T-cell (primary cell): ENCODE measurements at regions of chr2 and their contacts with region 1.

Region 1: DNA sequence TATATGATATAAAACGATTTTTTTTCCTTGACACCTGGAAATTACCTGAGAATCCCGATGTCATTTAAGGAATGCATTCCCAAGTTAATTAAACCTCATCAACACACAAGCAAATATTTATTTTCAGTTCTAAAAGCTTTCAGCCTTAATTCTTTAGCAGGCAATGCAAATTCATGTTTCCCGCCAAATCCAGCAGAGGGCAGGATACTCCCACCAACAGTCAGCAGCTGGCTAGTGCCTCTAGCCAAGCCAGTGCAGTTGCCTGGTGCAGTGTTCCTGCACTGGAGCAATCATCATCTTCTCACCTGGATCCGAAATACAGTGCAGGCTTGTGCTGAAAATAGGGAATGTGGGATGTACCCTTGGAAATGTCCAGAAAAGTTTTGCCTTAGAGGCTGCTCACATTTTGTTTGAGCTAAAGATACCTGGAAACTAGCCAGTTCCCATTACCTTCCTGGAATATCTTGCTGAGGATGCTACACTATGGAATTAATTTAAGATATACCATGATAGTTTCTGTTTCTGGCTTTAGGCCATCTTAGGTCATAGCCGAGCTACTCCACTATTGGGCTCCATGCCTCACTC is 48.4 kb upstream of the CYTIP start:
- DNase-seq: peak; percentile 45 to 83 (median 64)
- ATAC-seq: peak; percentile 86 to 91 (median 88)
- H3K4me3 ChIP-seq: no peak overlapping the region
- H3K4me3 Mint-ChIP-seq: no peak overlapping the region
- H3K27ac ChIP-seq: no peak overlapping the region
- H3K27ac Mint-ChIP-seq: peak overlapping the region in 1 of 2 donors; percentile 40
- H3K4me1 ChIP-seq: peaks cover 0 to 6% of the 10 kb centered on the region in 2 experiments
- H3K4me1 Mint-ChIP-seq: peaks cover 46 to 54% (median 49%) of the 10 kb centered on the region in 3 donors
- H3K27me3 ChIP-seq: no peaks in the 10 kb centered on the region
- H3K27me3 Mint-ChIP-seq: no peaks in the 10 kb centered on the region

Region 2: GRCh38 chr2:157336137-157337010 is 155.9 kb before region 1 on chr2:
- CTCF ChIA-PET with region 1: interaction called, 5 to 11 read pairs
- POLR2A ChIA-PET with region 1: interaction called in 1 of 2 experiments, 4 read pairs
- DNase-seq: peak in 24 of 35 experiments; percentile 1 to 75 (median 32)
- ATAC-seq: no peak
- H3K4me3 ChIP-seq: no peak overlapping the region
- H3K4me3 Mint-ChIP-seq: peak overlapping the region; percentile 50 to 67 (median 60)
- H3K27ac ChIP-seq: no peak overlapping the region
- H3K27ac Mint-ChIP-seq: peak overlapping the region; percentile 78 to 88
- H3K4me1 ChIP-seq: peaks cover 16 to 17% of the 10 kb centered on the region in 2 experiments
- H3K4me1 Mint-ChIP-seq: peaks cover 78 to 89% (median 79%) of the 10 kb centered on the region in 3 donors
- H3K27me3 ChIP-seq: no peaks in the 10 kb centered on the region
- H3K27me3 Mint-ChIP-seq: no peaks in the 10 kb centered on the region

Region 3: GRCh38 chr2:157480182-157480961 is 11.9 kb before region 1 on chr2:
- CTCF ChIA-PET with region 1: interaction called, 4 to 10 read pairs
- POLR2A ChIA-PET with region 1: no interaction called
- DNase-seq: no peak
- ATAC-seq: no peak
- H3K4me3 ChIP-seq: no peak overlapping the region
- H3K4me3 Mint-ChIP-seq: peak overlapping the region in 1 of 3 donors; percentile 48
- H3K27ac ChIP-seq: no peak overlapping the region
- H3K27ac Mint-ChIP-seq: peak overlapping the region in 1 of 2 donors; percentile 77
- H3K4me1 ChIP-seq: peaks cover 6 to 9% of the 10 kb centered on the region in 2 experiments
- H3K4me1 Mint-ChIP-seq: peaks cover 44 to 59% (median 46%) of the 10 kb centered on the region in 3 donors
- H3K27me3 ChIP-seq: no peaks in the 10 kb centered on the region
- H3K27me3 Mint-ChIP-seq: no peaks in the 10 kb centered on the region

Region 4: GRCh38 chr2:157911750-157912149 is 419.5 kb after region 1 on chr2:
- CTCF ChIA-PET with region 1: no interaction called
- POLR2A ChIA-PET with region 1: no interaction called
- DNase-seq: no peak
- ATAC-seq: no peak
- H3K4me3 ChIP-seq: no peak overlapping the region
- H3K4me3 Mint-ChIP-seq: no peak overlapping the region
- H3K27ac ChIP-seq: no peak overlapping the region
- H3K27ac Mint-ChIP-seq: no peak overlapping the region
- H3K4me1 ChIP-seq: no peaks in the 10 kb centered on the region
- H3K4me1 Mint-ChIP-seq: peaks cover 0 to 7% (median 0%) of the 10 kb centered on the region in 3 donors
- H3K27me3 ChIP-seq: no peaks in the 10 kb centered on the region
- H3K27me3 Mint-ChIP-seq: no peaks in the 10 kb centered on the region